ENCODE measurements at regions of chr12 and their contacts with region 1.

Region 1: DNA sequence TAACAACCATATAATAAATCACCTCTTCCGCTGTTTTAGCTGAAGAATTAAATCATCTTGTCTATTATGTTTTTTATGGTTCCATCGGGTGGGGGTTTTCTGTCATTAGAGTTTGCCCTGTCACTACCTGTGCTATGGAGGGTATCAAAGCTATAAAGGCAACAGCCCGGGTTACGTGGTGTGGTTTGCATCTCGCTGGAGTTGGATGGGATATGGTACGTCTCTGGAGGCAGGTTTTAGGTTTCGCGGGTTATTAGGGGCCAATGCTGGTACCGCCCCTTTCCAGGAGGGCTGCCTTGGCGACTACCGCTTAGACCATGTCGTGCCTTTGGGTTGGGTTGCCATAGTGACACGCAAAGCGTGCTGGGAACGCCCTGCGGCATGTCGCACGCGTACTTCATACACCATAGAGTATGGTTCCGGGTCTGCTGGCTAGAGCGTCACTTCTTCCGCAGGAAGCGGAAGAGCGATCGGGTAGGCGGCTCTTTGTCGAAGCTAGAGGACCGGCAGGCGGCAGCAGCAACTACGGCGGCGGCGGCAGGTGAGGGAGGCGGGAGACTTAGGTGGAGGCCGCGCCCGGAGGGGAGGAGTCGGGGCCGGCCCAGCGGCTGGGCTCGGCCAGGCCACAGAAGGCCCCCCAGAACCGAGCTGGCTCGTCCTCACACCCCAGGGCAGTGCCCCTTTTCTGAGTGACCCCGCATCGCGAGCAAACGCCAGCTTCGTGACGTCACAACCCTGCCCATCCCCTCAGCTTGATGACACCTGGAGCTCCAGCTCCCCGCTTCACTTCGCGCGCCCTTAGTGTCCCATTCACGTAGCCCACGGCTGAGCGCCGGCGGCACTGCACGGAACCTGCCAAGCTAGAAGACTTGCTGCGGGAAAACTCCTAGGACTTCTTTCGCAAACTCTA is at the start of gene ZC3H10:
- DNase-seq: peak; percentile 99
- ATAC-seq: peak; percentile 77
- H3K4me3 Mint-ChIP-seq: peak within 1 kb of the TSS; percentile 97
- H3K27ac Mint-ChIP-seq: peak within 1 kb of the TSS; percentile 100
- H3K4me1 Mint-ChIP-seq: peaks cover 24% of the 10 kb centered on the region
- H3K27me3 Mint-ChIP-seq: no peaks in the 10 kb centered on the region
- total RNA-seq, gene ZC3H10: 6.4 to 6.5 TPM

Region 2: GRCh38 chr12:55738123-55739024 is 379.7 kb before region 1 on chr12:
- CTCF ChIA-PET with region 1: interaction called, 5 read pairs
- POLR2A ChIA-PET with region 1: interaction called, 3 read pairs
- intact Hi-C with region 1: loop called in 1 of 2 experiments (anchors 2 kb)
- DNase-seq: peak; percentile 88
- ATAC-seq: peak; percentile 82
- H3K4me3 Mint-ChIP-seq: peak overlapping the region; percentile 68
- H3K27ac Mint-ChIP-seq: peak overlapping the region; percentile 76
- H3K4me1 Mint-ChIP-seq: peaks cover 23% of the 10 kb centered on the region
- H3K27me3 Mint-ChIP-seq: no peaks in the 10 kb centered on the region

Region 3: DNA sequence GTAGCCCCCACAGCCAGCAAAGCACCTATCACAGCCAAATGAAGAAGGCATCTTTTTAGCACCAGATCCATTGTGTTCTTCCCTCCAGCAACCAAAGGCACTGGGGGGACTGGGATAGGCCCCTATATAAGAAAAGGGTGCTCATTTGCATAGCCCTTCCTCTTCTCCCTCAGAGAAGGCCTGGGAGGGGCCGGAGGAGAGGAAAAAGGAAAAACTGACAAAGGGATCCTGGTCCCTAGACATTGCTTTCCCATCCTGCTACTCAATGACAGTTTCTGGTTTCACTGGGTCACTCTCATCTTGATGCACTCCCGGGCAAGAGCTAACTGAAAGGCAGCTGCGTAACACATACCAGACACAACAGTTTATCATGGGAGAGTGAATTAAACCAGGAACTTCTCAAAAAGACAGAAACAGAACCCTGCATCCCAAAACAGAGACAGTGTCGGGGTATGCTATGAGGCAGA is 152.1 kb before region 1 on chr12 and contains the start of gene PMEL:
- CTCF ChIA-PET with region 1: no interaction called
- POLR2A ChIA-PET with region 1: no interaction called
- intact Hi-C with region 1: no loop called
- DNase-seq: no peak
- ATAC-seq: peak; percentile 5
- H3K4me3 Mint-ChIP-seq: peak within 1 kb of the TSS; percentile 99
- H3K27ac Mint-ChIP-seq: peak within 1 kb of the TSS; percentile 94
- H3K4me1 Mint-ChIP-seq: peaks cover 30% of the 10 kb centered on the region
- H3K27me3 Mint-ChIP-seq: no peaks in the 10 kb centered on the region
- total RNA-seq, gene PMEL: 0.86 to 1.2 TPM

Region 4: DNA sequence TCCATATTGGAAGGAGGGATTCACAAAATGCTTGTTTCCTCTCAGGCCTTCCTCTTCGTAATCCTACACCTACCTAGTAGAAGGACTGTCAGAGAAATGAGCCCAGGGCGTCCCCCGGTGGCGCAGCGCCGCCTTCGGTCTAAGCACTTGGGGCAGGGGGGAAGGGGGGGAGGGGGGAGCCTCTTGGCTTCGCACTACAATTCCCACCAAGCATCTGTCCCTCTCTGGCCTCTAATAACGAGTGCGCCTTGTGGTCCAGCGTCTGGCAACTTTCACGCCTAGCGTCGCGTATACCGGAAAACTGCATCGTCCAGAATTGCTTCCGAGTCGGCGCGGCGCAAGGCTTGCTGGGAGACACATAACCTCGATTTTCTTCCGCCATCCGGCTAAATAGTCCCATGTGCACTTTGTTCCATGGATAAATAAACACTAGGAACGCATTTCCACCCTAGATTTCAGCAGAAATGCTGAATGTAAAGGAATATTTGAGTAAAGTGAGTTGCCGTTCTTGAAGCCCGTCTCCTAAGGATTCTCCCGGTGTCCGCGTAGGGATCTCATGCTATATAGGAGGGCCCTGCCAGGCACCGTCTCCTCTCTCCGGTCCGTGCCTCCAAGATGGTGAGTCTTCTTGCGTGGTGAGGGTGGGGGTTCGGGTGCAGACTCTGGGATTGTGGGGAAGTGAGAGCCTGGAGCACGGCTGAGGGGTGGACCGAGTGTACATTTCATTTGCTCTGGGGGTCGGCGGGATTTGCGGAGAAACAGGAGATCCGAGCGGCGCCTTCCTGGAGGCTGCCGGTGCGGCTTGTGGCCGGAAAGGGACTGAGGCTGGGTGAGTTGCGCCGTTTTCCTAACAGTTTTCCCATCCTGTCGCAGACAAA is 76.2 kb before region 1 on chr12 and contains the start of gene RPS26:
- CTCF ChIA-PET with region 1: interaction called, 12 read pairs
- POLR2A ChIA-PET with region 1: interaction called, 9 read pairs
- intact Hi-C with region 1: loop called (anchors 1 kb)
- DNase-seq: peak; percentile 97
- ATAC-seq: peak; percentile 92
- H3K4me3 Mint-ChIP-seq: peak within 1 kb of the TSS; percentile 91
- H3K27ac Mint-ChIP-seq: peak within 1 kb of the TSS; percentile 99
- H3K4me1 Mint-ChIP-seq: peaks cover 61% of the 10 kb centered on the region
- H3K27me3 Mint-ChIP-seq: no peaks in the 10 kb centered on the region
- total RNA-seq, gene RPS26: 33.9 to 64.0 TPM

Region 5: DNA sequence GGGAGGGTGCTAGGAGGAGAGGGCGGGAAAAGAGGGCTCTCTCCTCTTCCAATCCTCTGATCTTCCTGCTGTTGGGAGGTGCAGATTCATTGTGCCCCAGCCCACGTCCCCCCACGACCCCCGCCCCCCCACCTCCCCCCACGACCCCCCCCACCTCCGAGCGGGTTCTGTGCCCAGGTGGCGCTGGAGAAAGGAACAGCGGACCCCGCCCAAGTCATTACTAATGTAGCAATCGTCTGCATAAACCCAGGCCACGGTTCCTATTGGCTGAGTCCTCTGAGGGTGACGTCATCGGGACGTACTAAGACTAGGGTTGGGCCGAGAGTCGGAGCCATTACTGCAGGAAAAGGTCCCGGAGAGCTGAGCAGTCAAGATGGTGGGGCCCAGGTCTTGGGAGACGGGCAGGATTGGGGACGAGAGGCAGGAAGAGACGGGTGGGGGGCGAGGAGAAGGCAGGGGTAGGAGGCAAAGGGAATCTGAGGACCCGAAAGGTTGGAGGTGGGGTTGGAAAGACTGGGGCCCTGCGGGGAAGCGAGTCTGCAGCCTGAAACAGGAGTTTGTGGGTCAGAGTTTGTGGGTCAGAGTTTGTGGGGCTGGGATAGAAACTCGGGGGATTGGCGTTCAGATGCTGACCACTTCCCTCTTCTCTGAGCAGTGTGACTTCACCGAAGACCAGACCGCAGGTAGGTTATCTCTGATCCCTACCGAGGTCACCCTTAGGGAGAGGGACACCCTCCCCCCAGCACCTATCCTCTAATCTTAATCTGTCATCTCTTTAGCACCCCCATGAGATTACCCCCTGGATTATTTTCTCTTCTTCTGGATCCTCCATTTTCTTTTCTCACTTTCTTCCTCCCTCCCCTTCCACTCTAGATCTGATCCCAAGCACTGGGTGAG is 40.2 kb after region 1 on chr12 and contains the start of gene MYL6:
- CTCF ChIA-PET with region 1: interaction called, 12 read pairs
- POLR2A ChIA-PET with region 1: interaction called, 16 read pairs
- intact Hi-C with region 1: loop called (anchors 1 to 2 kb)
- DNase-seq: peak; percentile 96
- ATAC-seq: peak; percentile 85
- H3K4me3 Mint-ChIP-seq: peak within 1 kb of the TSS; percentile 99
- H3K27ac Mint-ChIP-seq: peak within 1 kb of the TSS; percentile 96
- H3K4me1 Mint-ChIP-seq: peaks cover 30% of the 10 kb centered on the region
- H3K27me3 Mint-ChIP-seq: no peaks in the 10 kb centered on the region
- total RNA-seq, gene MYL6: 692 to 918 TPM

Region 6: DNA sequence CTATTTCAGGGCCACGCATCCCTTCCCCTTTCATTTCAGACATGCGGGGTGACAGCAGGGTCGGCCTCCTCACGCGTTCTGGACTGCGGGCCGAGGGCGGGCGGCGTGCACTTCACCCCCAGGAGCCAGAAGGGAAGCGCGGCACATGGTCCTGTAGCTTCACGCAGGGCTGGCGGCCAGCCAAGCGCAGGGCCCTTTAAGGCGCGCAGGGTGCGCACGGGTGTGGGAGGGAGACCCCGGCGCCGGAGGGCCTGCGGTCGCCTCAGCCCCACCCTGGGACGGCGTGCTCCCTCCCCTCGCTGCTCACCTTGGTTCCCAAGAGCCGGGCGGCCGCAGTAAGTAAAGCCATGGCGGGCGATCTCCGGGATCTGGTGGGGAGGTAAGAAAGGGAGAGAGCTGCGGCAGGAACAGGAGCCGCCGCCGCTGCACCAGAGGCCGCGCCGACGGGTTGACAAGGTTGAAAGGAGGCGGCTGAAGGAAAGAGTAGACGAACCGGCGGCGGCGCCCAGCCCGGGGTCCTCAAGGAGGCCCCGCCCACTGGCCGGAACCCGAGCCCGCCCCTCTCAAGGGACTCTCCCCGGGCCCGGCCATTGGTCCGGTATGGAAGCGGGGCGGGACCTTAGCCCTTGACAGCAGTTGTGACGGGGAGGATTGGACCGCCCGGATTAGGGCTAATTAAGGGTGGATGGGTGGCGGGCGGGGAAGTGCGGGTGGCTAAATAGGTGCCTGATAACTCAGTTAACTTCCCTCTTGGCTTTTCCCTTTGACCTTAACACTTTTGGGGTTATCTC is 182.0 kb after region 1 on chr12 and contains the start of gene CS:
- CTCF ChIA-PET with region 1: no interaction called
- POLR2A ChIA-PET with region 1: no interaction called
- intact Hi-C with region 1: loop called in 1 of 2 experiments (anchors 2 kb)
- DNase-seq: peak; percentile 99
- ATAC-seq: peak; percentile 98
- H3K4me3 Mint-ChIP-seq: peak within 1 kb of the TSS; percentile 96
- H3K27ac Mint-ChIP-seq: peak within 1 kb of the TSS; percentile 91
- H3K4me1 Mint-ChIP-seq: peaks cover 49% of the 10 kb centered on the region
- H3K27me3 Mint-ChIP-seq: no peaks in the 10 kb centered on the region
- total RNA-seq, gene CS: 197 to 293 TPM

Region 7: DNA sequence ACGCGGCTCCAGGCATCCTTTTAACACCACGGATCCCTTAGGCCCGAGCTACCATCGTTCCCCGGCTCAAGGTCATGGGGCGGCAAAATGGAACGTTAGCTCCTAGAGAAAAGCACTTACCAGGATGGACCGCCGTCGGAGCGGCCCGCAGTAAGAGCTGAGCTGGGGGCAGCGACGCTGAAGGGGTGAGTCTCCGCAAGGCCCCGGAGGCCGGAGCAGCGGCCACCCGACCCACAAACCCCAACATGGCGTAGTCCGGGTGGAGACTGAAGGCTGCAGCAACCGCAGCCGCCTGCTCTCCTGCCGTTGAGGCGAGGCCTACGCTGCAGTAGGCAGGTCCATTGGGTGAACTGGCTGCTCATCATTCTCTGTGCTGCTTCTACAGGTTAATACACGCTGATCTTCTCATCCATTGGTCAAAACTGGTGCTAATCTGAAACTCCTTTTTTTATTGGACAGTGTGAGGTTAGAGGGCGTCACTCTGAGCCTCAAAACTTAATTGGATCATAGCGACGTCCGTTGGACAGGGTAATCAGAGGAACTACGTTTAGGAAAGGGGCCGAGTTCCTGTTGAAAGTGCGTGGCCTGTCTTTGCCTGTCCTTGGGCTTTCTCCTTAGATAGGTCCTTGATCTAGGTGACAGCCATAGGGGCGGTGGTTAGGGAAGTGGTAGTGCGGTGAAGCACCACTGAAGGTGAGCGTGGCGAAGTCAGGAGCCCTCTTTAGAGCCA is 527.8 kb after region 1 on chr12 and contains the start of gene ATP5F1B:
- CTCF ChIA-PET with region 1: no interaction called
- POLR2A ChIA-PET with region 1: no interaction called
- intact Hi-C with region 1: loop called in 1 of 2 experiments (anchors 5 kb)
- DNase-seq: peak; percentile 95
- ATAC-seq: peak; percentile 99
- H3K4me3 Mint-ChIP-seq: peak within 1 kb of the TSS; percentile 95
- H3K27ac Mint-ChIP-seq: peak within 1 kb of the TSS; percentile 95
- H3K4me1 Mint-ChIP-seq: peaks cover 30% of the 10 kb centered on the region
- H3K27me3 Mint-ChIP-seq: no peaks in the 10 kb centered on the region
- total RNA-seq, gene ATP5F1B: 756 to 818 TPM